ENCODE measurements at regions of chr6 and their contacts with region 1.

Region 1: DNA sequence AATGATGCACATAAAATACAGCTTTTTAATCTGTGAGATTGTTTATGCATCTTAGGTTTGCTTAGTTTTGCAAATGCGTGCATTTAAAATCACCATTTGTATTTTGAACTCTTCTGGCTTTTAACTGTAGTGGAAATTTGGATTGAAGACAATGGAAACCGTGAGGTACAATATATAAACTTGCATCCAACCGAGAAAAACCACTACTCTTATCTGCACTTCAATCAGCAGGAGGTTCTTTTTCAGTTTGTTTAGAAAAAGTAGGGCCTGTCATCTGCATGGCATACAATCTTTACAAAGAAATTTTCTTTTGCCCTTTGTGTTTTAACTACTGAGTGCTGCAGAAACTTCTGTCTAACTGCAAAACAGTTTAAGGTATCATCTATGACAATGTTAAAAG is 132.8 kb downstream of the LAMA2 start:
- DNase-seq: no peak
- H3K4me3 ChIP-seq: no peak overlapping the region
- H3K27ac ChIP-seq: no peak overlapping the region
- H3K4me1 ChIP-seq: no peaks in the 10 kb centered on the region
- H3K27me3 ChIP-seq: no peaks in the 10 kb centered on the region
- CTCF ChIP-seq: no peak
- POLR2A ChIP-seq: no peak

Region 2: DNA sequence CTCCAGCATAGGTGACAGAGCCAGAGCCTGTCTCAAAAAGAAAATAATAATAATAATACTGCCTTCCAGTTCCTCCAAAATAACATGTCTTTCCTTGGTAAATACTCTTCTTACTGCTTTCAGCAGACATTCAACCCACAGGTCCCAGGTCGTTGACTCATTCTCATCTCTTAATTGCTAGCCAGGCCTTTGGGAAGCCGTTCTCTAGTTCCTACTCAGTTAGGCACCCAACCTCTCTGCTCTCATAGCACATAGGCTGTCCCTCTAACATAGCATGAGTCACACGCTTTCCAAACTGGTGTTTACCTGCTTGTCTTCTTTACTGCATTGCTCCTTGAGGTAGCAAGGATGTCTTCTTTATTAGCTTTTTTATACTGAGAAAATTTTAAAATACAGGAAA is 34.0 kb before region 1 on chr6:
- intact Hi-C with region 1: loop called (anchors 5 kb)
- DNase-seq: no peak
- H3K4me3 ChIP-seq: no peak overlapping the region
- H3K27ac ChIP-seq: no peak overlapping the region
- H3K4me1 ChIP-seq: no peaks in the 10 kb centered on the region
- H3K27me3 ChIP-seq: no peaks in the 10 kb centered on the region
- CTCF ChIP-seq: no peak
- POLR2A ChIP-seq: no peak